B cell (primary cell): ENCODE measurements at regions of chr16 and their contacts with region 1.

Region 1: GRCh38 chr16:70267516-70267915 is 15.8 kb upstream of the EXOSC6 start:
- DNase-seq: peak; percentile 52
- ATAC-seq: no peak
- H3K4me3 ChIP-seq: no peak overlapping the region
- H3K4me3 Mint-ChIP-seq: no peak overlapping the region
- H3K27ac ChIP-seq: no peak overlapping the region
- H3K27ac Mint-ChIP-seq: no peak overlapping the region
- H3K4me1 ChIP-seq: no peaks in the 10 kb centered on the region
- H3K4me1 Mint-ChIP-seq: no peaks in the 10 kb centered on the region
- H3K27me3 ChIP-seq: no peaks in the 10 kb centered on the region
- H3K27me3 Mint-ChIP-seq: no peaks in the 10 kb centered on the region
- CTCF ChIP-seq: peak; percentile 73

Region 2: GRCh38 chr16:70162041-70162451 is 105.5 kb before region 1 on chr16:
- CTCF ChIA-PET with region 1: interaction called, 6 read pairs
- POLR2A ChIA-PET with region 1: no interaction called
- intact Hi-C with region 1: loop called (anchors 10 kb)
- DNase-seq: no peak
- ATAC-seq: no peak
- H3K4me3 ChIP-seq: no peak overlapping the region
- H3K4me3 Mint-ChIP-seq: no peak overlapping the region
- H3K27ac ChIP-seq: no peak overlapping the region
- H3K27ac Mint-ChIP-seq: no peak overlapping the region
- H3K4me1 ChIP-seq: no peaks in the 10 kb centered on the region
- H3K4me1 Mint-ChIP-seq: peaks cover 3% of the 10 kb centered on the region
- H3K27me3 ChIP-seq: no peaks in the 10 kb centered on the region
- H3K27me3 Mint-ChIP-seq: no peaks in the 10 kb centered on the region
- CTCF ChIP-seq: no peak

Region 3: DNA sequence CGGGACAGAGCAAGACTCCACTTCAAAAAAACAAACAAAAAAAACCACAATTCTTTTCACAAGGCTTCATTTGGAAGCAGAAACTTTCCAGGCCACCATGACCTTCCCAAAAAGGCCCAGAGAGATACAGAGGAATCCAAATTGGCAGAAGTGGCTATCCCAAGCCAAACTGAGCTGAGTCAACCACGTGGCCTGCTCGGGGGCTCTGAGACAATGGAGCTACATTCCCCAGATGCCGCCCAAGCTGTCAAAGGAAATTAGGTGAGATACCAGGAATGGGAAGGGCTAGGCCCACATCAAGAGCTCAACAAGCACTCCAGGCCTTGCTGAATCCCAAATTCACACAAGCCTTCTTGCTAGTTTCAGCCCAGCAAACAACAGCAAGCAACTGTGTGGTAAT is 10.1 kb before region 1 on chr16:
- CTCF ChIA-PET with region 1: interaction called, 12 read pairs
- POLR2A ChIA-PET with region 1: no interaction called
- intact Hi-C with region 1: no loop called
- DNase-seq: no peak
- ATAC-seq: no peak
- H3K4me3 ChIP-seq: no peak overlapping the region
- H3K4me3 Mint-ChIP-seq: no peak overlapping the region
- H3K27ac ChIP-seq: no peak overlapping the region
- H3K27ac Mint-ChIP-seq: no peak overlapping the region
- H3K4me1 ChIP-seq: no peaks in the 10 kb centered on the region
- H3K4me1 Mint-ChIP-seq: no peaks in the 10 kb centered on the region
- H3K27me3 ChIP-seq: no peaks in the 10 kb centered on the region
- H3K27me3 Mint-ChIP-seq: no peaks in the 10 kb centered on the region
- CTCF ChIP-seq: no peak